ENCODE measurements at regions of chr18 and their contacts with region 1.

Region 1: DNA sequence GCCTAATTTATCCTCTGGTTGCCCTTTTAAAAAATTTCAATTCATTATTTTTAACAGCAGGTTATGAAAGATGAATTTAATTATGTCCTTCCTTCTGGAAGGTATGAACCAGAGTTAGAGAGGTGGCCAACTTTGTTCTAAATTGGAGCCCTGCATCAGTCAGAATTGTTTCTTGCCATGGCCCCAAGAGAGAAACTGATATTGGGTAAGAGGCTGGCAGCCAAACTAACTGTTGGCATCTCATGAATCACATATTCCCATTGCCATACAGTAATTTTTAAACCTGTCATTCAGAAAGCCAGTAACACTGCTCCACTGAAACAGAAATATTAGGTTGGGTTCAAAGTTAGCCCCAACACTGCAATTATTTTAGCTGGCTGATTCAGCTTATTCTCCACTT is 67.4 kb downstream of the SMAD2 start:
- DNase-seq: no peak

Region 2: DNA sequence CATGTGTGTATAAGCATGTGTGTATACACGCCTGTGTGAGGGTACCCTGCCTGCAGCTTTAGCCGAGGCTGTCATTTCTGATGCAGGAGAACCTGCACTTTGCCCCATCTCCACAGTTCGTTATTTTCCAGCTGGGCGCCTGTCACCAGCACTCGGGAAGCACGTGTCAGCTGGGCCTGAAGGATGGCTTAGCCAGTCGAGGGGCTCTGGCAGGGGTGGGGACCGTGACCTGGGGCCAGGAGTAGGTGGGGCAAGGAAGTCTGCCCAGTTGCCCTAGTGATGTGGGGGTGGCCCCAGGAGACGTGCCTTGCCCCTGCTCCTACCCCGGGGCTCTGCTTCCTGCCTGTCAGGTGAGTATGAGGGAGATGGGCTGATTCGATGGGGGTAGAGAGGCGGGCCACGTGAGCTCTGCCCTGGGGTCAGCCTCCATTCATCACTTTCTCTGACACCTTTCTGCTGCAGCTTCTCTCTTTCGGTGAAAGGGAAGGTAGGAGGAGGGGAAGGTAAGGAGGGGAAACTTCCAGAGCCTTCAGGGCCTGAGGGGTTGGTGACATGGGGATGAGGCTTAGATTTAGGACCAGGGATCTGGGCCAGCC is 481.0 kb before region 1 on chr18:
- intact Hi-C with region 1: no loop called
- DNase-seq: no peak

Region 3: DNA sequence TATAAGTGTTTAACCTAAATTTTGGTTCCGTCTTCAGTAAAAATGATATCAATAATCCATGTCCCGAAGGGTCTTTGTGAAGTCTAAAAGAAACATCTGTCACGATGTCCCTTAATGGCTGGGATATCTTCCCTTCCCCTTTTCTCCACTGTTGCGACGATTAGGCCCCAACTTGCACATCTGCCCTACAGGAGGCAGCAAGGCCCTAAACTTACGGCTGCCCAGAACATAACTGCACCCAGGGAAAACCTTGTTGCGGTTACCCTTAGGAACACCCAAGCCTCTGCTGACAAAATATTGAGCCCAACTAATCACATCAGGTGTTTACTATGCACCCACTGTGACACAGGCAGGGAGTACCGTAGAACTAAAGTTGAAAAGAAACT is 68.7 kb after region 1 on chr18:
- intact Hi-C with region 1: loop called in 1 of 2 experiments (anchors 2 kb)
- DNase-seq: no peak

Measured in posterior vena cava (tissue), 2 donors.